Activated CD4-positive, alpha-beta memory T cell treated with anti-CD3 and anti-CD28 coated beads for 36 hours (primary cell): ENCODE measurements at regions of chr17 and their contacts with region 1.

Region 1: GRCh38 chr17:65523853-65524664 is 37.4 kb downstream of the AXIN2 start:
- DNase-seq: peak; percentile 10
- H3K4me3 Mint-ChIP-seq: no peak overlapping the region
- H3K27ac Mint-ChIP-seq: peak overlapping the region; percentile 57
- H3K4me1 Mint-ChIP-seq: peaks cover 24% of the 10 kb centered on the region
- H3K27me3 Mint-ChIP-seq: no peaks in the 10 kb centered on the region

Region 2: DNA sequence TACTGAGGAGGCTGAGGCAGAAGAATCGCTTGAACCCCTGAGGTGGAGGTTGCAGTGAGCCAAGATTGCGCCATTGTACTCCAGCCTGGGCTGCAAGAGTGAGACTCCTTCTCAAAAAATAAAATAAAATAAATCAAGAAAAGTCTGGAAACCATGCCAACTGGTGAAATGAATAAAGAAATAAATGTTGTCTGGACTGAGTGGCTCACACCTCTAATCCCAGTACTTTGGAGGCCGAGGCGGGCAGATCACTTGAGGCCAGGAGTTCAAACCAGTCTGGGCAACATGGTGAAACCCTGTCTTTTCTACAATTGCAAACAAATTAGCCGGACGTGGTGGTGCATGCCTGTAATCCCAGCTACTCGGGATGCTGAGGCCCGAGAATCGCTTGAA is 604.0 kb before region 1 on chr17:
- CTCF ChIA-PET with region 1: no interaction called
- POLR2A ChIA-PET with region 1: no interaction called
- intact Hi-C with region 1: no loop called
- DNase-seq: no peak
- H3K4me3 Mint-ChIP-seq: peak overlapping the region; percentile 81
- H3K27ac Mint-ChIP-seq: peak overlapping the region; percentile 87
- H3K4me1 Mint-ChIP-seq: peaks cover 8% of the 10 kb centered on the region
- H3K27me3 Mint-ChIP-seq: no peaks in the 10 kb centered on the region

Region 3: GRCh38 chr17:65584604-65585541 is 60.8 kb after region 1 on chr17:
- CTCF ChIA-PET with region 1: no interaction called
- POLR2A ChIA-PET with region 1: no interaction called
- intact Hi-C with region 1: loop called (anchors 1 kb)
- DNase-seq: no peak
- H3K4me3 Mint-ChIP-seq: no peak overlapping the region
- H3K27ac Mint-ChIP-seq: peak overlapping the region; percentile 63
- H3K4me1 Mint-ChIP-seq: peaks cover 15% of the 10 kb centered on the region
- H3K27me3 Mint-ChIP-seq: no peaks in the 10 kb centered on the region